ENCODE measurements at regions of chr3 and their contacts with region 1.

Region 1: GRCh38 chr3:52014613-52015012 is 18.9 kb upstream of the RPL29 start:
- DNase-seq: no peak
- H3K4me3 ChIP-seq: no peak overlapping the region
- H3K27ac ChIP-seq: no peak overlapping the region
- H3K4me1 ChIP-seq: no peaks in the 10 kb centered on the region
- H3K27me3 ChIP-seq: no peaks in the 10 kb centered on the region
- CTCF ChIP-seq: peak in 1 of 7 experiments; percentile 7
- EP300 ChIP-seq: no peak
- POLR2A ChIP-seq: no peak

Region 2: GRCh38 chr3:51682079-51682478 is 332.5 kb before region 1 on chr3:
- intact Hi-C with region 1: no loop called
- DNase-seq: peak; percentile 56 to 91
- H3K4me3 ChIP-seq: no peak overlapping the region
- H3K27ac ChIP-seq: peak overlapping the region in 3 of 5 donors; percentile 16 to 50 (median 32)
- H3K4me1 ChIP-seq: peaks cover 18 to 74% (median 46%) of the 10 kb centered on the region in 4 donors
- H3K27me3 ChIP-seq: no peaks in the 10 kb centered on the region
- CTCF ChIP-seq: peak in 5 of 7 experiments; percentile 58 to 79 (median 75)
- EP300 ChIP-seq: no peak
- POLR2A ChIP-seq: no peak

Region 3: DNA sequence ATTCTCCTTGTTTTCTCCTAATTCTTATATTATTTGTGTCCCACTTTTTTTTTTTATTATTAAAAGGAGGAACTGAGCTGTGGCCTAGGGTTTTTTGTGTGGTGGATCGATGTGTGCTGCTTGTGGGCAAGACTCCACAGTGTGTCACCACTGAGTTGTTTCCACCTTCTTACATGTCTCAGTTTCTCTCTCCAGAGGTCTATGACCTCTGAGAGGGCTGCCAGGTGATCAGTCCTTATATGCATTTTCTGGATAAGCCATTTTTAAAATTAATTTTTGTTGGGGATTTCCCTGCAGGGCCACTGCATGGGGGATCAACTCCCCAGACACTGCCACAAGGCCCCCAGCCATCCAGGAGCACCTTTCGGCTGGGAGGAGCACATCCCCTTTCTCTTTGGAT is 263.3 kb before region 1 on chr3:
- intact Hi-C with region 1: no loop called
- DNase-seq: no peak
- H3K4me3 ChIP-seq: no peak overlapping the region
- H3K27ac ChIP-seq: no peak overlapping the region
- H3K4me1 ChIP-seq: peaks cover 0 to 10% (median 5%) of the 10 kb centered on the region in 4 donors
- H3K27me3 ChIP-seq: no peaks in the 10 kb centered on the region
- CTCF ChIP-seq: no peak
- EP300 ChIP-seq: no peak
- POLR2A ChIP-seq: no peak

Region 4: GRCh38 chr3:51908026-51908425 is 106.6 kb before region 1 on chr3:
- intact Hi-C with region 1: no loop called
- DNase-seq: no peak
- H3K4me3 ChIP-seq: no peak overlapping the region
- H3K27ac ChIP-seq: no peak overlapping the region
- H3K4me1 ChIP-seq: no peaks in the 10 kb centered on the region
- H3K27me3 ChIP-seq: peaks cover 0 to 6% (median 0%) of the 10 kb centered on the region in 3 donors
- CTCF ChIP-seq: no peak
- EP300 ChIP-seq: no peak
- POLR2A ChIP-seq: no peak

Region 5: GRCh38 chr3:52134761-52135160 is 120.1 kb after region 1 on chr3:
- intact Hi-C with region 1: loop called (anchors 5 kb)
- DNase-seq: no peak
- H3K4me3 ChIP-seq: no peak overlapping the region
- H3K27ac ChIP-seq: no peak overlapping the region
- H3K4me1 ChIP-seq: peaks cover 0 to 6% (median 0%) of the 10 kb centered on the region in 4 donors
- H3K27me3 ChIP-seq: no peaks in the 10 kb centered on the region
- CTCF ChIP-seq: no peak
- EP300 ChIP-seq: no peak
- POLR2A ChIP-seq: no peak

Region 6: DNA sequence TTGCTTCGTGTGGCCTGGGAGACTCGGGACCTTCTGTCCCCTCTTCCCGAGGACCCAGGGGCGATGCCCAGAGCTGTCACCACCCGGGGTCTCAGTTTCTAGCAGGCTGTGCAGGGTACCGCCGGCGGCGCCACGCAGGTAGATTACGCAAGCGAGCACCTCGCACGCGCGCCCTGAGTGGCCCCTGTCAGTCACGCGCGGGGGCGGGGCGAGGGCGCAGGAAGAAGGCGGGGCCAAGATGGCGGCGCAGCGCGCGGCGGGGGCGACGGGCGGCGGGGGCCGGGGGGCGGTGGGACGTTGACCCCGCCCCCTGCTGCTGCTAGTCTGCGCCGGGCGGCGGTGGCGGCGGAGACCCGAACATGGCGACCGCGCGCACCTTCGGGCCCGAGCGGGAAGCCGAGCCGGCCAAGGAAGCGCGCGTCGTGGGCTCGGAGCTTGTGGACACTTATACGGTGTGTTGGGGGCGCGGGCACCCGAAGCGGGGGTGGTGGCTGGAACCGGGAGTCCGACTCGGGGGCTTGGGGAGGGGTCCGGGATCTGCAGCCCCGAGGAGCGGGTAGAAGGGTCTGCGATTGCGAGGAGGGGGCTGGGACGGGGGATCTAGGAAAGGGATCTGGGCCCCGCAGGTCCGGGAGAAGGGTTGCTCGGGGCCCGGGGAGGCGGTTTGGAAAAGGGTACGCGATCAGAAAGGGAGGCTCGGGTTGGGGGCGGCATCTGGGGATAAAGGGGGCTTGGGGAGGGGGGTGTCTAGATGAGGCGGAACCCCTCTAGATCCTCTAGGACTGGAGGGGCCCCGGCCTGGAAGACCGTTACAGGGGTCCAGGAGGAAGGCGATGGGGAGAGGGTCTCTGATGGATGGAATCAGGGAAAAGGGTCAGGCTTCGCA is 440.9 kb after region 1 on chr3 and contains the start of gene NISCH:
- intact Hi-C with region 1: no loop called
- DNase-seq: peak; percentile 95 to 96
- H3K4me3 ChIP-seq: peak within 1 kb of the TSS; percentile 79 to 97 (median 88)
- H3K27ac ChIP-seq: peak within 1 kb of the TSS; percentile 81 to 94 (median 90)
- H3K4me1 ChIP-seq: peaks cover 31 to 49% (median 45%) of the 10 kb centered on the region in 4 donors
- H3K27me3 ChIP-seq: no peaks in the 10 kb centered on the region
- CTCF ChIP-seq: no peak
- EP300 ChIP-seq: no peak
- POLR2A ChIP-seq: peak in 1 of 4 donors; percentile 36
- total RNA-seq, gene NISCH: 68.5 to 456 (median 147) TPM